Activated T-helper 2 cell treated with anti-CD3 and anti-CD28 coated beads, Interferon-gamma antibody, Interleukin-2, Interleukin-4, amounts not matched to agents 10 μg/mL and 5 μg/mL and 100 μg/mL, durations not matched to agents 14 hours and 24 hours and 36 hours (primary cell): ENCODE measurements at regions of chr9 and their contacts with region 1.

Region 1: DNA sequence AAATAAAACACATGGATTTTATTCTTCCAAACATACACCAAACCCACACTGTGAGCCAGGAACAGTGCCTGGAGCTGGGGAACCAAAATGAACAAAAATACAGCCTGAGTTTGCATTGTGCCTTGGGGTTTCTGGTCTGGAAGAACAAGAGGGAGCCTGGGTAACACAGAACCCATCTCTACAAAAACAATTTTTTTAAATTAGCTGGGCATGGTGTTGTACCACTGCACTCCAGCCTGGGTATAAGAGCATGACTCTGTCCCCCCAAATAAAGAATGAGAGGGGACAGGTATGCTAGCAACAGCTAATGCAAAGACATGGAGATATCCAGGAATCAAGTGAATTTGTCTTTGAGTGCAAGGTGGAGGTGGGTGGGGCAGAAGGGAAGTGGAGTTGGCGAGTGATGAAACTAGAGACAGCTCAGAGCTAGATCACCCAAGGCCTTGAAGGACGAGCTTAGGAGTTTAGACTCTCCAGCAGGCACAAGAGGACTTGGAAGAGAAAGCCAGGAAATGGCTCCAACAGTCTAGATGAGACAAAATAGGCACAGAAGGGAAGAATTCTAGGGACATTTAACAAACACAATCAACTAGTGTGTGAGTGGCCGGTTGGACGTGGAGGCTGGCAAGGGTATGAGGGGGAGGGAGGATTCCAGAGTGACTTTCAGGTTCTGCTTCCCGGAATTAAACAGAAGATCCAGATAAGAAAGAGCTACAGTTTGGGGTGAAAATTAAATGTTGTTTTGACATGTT is 47.4 kb downstream of the FNBP1 start:
- DNase-seq: no peak
- H3K4me3 Mint-ChIP-seq: peak overlapping the region; percentile 68
- H3K27ac Mint-ChIP-seq: peak overlapping the region; percentile 95
- H3K4me1 Mint-ChIP-seq: peaks cover 56% of the 10 kb centered on the region
- H3K27me3 Mint-ChIP-seq: no peaks in the 10 kb centered on the region

Region 2: DNA sequence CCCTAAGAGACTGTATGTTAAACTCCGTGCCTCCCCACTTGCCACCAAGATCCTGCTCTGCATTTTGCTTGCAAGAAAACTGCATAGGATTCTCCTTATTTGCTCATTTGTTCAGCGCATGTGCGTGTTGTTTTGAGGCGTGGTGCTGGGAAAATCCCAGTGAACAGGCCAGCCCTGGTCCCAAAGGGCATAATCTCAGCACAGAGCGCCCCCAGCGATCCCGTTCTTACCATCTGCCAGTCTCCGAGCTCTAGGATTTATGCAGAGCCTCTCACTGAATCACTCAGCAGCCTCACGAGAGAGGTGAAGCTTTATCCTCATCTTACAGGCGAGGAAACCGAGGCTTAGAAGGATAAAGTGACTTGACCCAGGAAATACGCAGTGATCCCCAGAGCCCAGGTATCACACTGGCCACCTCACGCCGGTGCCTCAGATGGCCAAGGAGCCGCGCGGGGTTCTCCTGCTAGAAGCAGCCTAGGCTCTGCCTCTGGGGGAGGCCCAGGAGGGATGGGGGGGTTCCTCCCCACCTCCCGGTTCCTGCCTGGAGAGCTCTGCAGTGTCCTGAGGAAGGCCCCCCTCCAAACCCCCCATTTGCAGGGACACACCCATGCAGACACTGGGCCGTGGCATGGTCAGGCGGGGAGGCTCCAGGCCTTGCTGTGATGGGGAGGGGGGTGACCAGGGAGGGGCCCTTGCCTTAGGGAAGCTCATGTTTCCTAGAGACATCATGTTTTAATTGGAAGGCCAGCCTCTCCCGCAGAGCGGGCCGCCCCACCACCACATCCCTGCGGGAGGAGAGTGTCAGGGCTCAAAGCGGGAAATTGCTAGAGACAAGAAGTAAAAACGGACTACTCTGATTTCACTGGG is 318.4 kb before region 1 on chr9:
- intact Hi-C with region 1: no loop called
- DNase-seq: no peak
- H3K4me3 Mint-ChIP-seq: no peak overlapping the region
- H3K27ac Mint-ChIP-seq: no peak overlapping the region
- H3K4me1 Mint-ChIP-seq: peaks cover 2% of the 10 kb centered on the region
- H3K27me3 Mint-ChIP-seq: peaks cover 6% of the 10 kb centered on the region

Region 3: GRCh38 chr9:130010151-130010988 is 14.8 kb after region 1 on chr9:
- intact Hi-C with region 1: loop called (anchors 1 kb)
- DNase-seq: no peak
- H3K4me3 Mint-ChIP-seq: peak overlapping the region; percentile 55
- H3K27ac Mint-ChIP-seq: peak overlapping the region; percentile 95
- H3K4me1 Mint-ChIP-seq: peaks cover 61% of the 10 kb centered on the region
- H3K27me3 Mint-ChIP-seq: no peaks in the 10 kb centered on the region